Calu3 (cell line): ENCODE measurements at regions of chr4 and their contacts with region 1.

Region 1: DNA sequence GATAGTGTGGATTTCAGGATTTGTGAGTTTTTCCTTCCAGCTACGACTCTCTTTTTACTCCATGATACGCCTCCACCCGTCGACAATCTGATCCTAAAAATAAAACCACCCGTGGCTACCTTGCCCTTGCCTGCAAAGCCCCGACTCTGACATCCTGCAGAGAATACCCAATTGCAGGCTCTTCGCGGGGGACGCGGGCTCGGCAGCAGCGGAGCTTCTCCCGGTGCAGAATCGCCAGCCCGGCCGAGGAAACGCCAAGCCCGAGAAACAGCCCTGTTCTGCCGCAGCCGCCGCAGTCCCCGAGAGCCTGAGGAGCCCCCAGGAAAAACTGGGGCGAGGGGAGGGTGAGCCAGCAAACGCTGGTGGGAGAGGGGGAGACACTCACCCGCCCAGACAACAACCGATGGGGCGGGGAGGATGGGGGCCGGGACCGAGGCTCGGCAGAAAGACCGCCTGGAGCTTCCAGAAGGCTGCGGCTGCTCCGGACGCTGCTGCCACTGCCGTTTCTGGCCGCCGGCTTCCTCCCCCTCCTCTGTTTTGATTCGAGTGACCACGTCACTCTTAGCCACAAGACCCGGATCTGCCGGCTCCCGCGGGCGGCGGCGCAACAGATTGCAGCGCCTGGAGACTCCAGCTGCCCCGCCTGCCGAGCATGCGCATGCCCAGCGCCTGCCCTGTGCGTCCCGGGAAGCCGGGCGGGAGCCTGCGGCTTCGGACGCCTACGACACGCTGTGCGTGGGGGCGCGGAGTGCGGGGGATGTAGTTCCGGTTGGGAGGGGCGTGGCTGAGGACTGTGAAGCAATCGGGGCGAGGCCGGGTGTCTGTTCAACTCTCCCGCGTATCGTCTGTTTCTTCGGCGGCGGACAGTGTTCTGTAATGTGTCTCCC is at the start of gene SMIM14:
- DNase-seq: peak; percentile 96
- H3K4me3 Mint-ChIP-seq: peak within 1 kb of the TSS; percentile 89
- H3K27ac Mint-ChIP-seq: peak within 1 kb of the TSS; percentile 77
- H3K4me1 Mint-ChIP-seq: peaks cover 16% of the 10 kb centered on the region
- H3K27me3 Mint-ChIP-seq: no peaks in the 10 kb centered on the region
- CTCF ChIP-seq: no peak
- total RNA-seq, gene SMIM14: 19.5 and 22.2 TPM in 2 replicates

Region 2: DNA sequence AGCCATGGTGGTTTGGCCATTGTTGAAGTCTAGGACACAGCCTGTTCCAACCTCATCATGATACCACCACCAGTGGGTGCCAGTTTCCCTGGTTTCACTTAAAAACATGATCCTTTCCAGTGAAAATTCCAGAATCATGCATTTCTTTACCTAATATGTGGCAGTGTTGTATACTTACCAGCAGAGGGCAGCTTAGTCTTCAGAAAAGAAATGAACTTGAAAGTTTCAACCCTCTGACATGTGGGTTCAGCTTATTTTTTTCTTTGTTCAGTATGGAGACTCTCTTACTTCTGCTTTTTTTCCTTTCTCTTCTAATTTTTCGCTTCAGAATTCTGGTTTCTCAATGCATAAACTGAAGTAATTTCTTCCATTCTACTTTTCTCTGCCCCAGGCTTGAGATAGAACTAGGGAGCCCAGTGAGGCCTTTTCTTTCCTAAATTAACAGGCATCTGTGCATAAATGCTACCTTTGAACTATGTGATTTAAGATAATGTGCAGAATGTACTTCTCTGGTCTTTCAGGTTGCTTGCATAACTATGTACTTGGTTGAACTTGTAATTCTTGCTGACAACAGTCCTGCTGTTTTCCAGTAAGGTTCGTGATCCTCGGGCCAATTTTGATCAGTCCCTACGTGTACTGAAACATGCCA is 169.0 kb before region 1 on chr4:
- CTCF ChIA-PET with region 1: interaction called, 3 read pairs
- intact Hi-C with region 1: loop called (anchors 2 kb)
- DNase-seq: peak; percentile 40
- H3K4me3 Mint-ChIP-seq: no peak overlapping the region
- H3K27ac Mint-ChIP-seq: no peak overlapping the region
- H3K4me1 Mint-ChIP-seq: peaks cover 8% of the 10 kb centered on the region
- H3K27me3 Mint-ChIP-seq: no peaks in the 10 kb centered on the region
- CTCF ChIP-seq: peak; percentile 45

Region 3: DNA sequence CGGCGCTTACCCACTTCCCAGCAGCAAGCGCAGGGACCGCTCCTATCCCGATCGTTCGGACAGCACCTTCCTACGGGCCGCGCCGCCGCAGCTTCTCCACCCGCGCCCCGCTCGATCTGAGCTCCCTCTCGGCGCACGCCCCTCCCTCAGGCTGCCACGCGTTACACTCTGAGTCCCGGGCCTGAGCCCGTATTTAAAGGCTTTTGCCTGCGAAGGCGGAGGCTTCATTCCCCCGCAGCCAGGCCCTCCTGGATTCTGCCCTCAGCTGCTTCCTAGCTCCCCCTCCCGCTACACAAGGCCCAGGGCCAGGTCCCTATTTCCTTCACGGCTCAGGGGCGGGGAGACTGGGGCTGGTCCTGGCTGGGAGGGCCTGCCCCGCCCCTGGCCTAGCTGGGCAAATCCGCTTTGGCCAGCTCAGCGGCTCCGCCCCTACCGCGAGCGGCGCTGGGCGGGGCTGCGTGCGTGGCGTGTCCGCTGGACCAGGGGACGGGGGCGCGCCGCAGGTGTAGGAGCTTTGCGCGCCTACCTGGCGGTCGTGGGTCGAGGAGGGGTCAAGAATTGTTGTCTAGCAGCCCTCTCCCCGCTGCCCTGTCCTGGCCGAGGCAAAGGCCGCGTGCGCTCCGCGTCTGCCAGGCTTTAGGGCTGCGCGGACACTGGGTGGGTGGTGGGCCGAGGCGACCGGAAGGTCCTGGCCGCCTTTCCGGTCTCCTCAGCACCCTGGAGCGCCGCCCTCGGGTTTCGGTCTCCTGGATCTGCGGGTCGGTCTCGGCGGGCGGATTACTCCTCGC is 111.1 kb before region 1 on chr4 and contains the start of gene UGDH:
- CTCF ChIA-PET with region 1: no interaction called
- intact Hi-C with region 1: loop called (anchors 5 kb)
- DNase-seq: peak; percentile 96
- H3K4me3 Mint-ChIP-seq: peak within 1 kb of the TSS; percentile 87
- H3K27ac Mint-ChIP-seq: peak within 1 kb of the TSS; percentile 97
- H3K4me1 Mint-ChIP-seq: no peaks in the 10 kb centered on the region
- H3K27me3 Mint-ChIP-seq: no peaks in the 10 kb centered on the region
- CTCF ChIP-seq: no peak
- total RNA-seq, gene UGDH: 71.8 and 77.3 TPM in 2 replicates